Psoas muscle (tissue), 8 donors: ENCODE measurements at regions of chr4 and their contacts with region 1.

Region 1: DNA sequence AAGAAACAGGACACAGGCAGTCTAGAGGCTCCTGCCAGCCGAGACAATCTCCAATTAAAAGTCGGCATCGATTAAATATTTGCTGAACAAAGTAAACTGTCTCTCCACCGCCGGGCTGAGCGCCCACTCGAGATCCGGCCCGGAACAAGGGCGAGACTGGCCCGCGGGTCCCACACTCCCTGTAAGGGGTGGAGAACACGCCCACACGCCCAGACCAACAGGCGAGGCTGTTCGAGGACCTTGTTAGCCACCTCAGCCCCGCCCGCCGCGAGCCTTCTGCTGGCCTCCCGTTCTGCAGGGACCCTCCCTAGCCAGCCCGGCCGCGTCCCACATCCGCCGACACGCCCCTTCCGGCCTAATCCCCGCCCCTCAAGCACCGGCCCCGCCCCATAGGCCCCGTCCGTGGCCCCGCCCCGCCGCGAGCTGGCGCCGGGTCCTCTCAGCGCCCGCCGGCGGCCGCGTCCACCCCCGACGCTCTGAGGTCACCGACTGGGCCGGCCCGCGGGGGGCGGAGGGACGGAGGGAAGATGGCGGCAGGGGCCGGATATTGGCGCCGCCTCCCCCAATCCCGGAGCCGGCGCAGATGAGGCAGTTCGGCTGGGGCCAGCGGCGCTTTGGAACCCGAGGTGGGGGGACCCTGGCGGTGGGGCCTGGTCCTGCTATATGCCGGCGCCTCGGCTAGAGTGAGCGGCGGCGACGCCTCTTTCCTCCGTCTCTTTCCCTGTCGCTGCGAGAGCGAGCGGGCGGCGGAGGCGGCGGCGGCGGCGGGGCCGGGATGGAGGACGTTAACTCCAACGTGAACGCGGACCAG is at the start of gene SLAIN2:
- DNase-seq: peak; percentile 99 to 100
- ATAC-seq: peak; percentile 92 to 96 (median 94)
- H3K4me3 ChIP-seq: peak within 1 kb of the TSS; percentile 95
- H3K27ac ChIP-seq: peak within 1 kb of the TSS; percentile 98
- H3K4me1 ChIP-seq: peaks cover 59% of the 10 kb centered on the region
- H3K27me3 ChIP-seq: no peaks in the 10 kb centered on the region
- CTCF ChIP-seq: peak; percentile 35
- total RNA-seq, gene SLAIN2: 157 to 204 (median 191) TPM

Region 2: DNA sequence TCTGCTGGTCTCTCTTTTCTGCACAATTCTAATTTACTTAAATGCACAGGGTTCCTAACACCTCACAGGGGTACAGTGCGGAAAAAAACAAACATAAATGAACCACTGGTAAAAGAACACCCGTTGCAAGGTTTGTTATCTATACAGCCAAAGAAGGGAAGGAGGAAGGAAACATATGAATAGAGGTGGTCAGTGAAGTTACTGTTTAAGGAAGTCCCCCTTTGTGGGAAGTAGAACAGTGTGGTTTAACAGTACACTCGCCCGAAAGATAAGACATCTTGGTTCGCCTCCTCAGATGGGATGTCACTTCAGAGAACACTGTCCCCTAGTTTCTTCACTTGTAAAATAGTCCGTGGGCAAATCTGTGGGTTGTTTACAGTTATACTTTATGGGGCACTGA is 129.0 kb before region 1 on chr4:
- intact Hi-C with region 1: no loop called
- DNase-seq: no peak
- ATAC-seq: no peak
- H3K4me3 ChIP-seq: no peak overlapping the region
- H3K27ac ChIP-seq: no peak overlapping the region
- H3K4me1 ChIP-seq: no peaks in the 10 kb centered on the region
- H3K27me3 ChIP-seq: no peaks in the 10 kb centered on the region
- CTCF ChIP-seq: no peak

Region 3: DNA sequence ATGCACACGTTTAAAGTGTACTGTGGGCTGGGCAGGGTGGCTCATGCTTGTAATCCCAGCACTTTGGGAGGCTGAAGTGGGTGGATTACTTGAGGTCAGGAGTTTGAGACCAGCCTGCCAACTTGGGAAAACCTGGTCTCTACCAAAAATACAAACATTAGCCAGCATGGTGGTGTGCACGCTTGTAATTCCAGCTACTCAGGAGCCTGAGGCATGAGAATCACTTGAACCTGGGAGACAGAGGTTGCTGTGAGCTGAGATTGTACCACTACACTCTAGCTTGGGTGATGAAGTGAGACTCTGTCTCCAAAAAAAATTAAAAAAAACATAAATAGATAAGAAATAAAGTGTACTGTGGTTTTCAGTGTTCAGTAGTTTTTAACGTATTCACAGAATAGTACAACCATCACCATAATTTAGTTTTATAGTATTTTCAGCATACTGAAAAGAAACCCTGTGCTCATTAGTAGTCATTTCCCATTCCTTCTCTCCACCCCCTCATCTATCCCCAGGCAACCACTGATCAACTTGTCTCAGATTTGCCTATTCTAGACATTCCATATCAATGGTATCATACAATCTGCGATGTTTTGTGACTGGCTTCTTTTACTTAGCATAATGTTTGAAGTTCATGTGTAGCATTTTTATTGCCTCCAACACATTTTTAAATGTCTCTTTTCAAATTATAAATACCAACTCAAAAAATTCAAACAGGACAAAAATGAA is 19.3 kb after region 1 on chr4:
- intact Hi-C with region 1: no loop called
- DNase-seq: no peak
- ATAC-seq: peak in 1 of 4 donors; percentile 22
- H3K4me3 ChIP-seq: no peak overlapping the region
- H3K27ac ChIP-seq: no peak overlapping the region
- H3K4me1 ChIP-seq: peaks cover 24% of the 10 kb centered on the region
- H3K27me3 ChIP-seq: no peaks in the 10 kb centered on the region
- CTCF ChIP-seq: no peak

Region 4: GRCh38 chr4:48375651-48376293 is 34.6 kb after region 1 on chr4:
- intact Hi-C with region 1: loop called in 1 of 2 experiments (anchors 5 kb)
- DNase-seq: no peak
- ATAC-seq: peak; percentile 43 to 80 (median 62)
- H3K4me3 ChIP-seq: no peak overlapping the region
- H3K27ac ChIP-seq: peak overlapping the region; percentile 56
- H3K4me1 ChIP-seq: peaks cover 27% of the 10 kb centered on the region
- H3K27me3 ChIP-seq: no peaks in the 10 kb centered on the region
- CTCF ChIP-seq: no peak

Region 5: DNA sequence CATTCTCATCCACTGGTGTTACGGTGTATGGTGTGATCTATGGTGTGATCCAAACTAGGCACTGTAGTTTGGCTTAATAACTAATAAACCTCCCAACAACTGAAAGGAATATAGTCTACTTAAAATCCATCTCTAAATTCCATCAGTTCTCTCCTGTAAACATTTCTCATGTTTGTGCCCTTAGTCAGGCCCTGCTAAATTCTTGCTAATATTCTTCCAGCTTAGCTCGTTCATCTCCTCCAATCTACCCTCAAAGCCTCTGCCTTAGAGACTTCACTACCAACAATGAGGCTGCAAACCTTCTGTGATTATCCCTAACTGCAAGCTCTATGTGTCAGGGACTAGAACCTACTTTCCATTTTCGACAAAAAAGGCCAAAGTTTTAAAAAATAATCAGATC is 177.0 kb after region 1 on chr4:
- intact Hi-C with region 1: no loop called
- DNase-seq: no peak
- ATAC-seq: no peak
- H3K4me3 ChIP-seq: no peak overlapping the region
- H3K27ac ChIP-seq: no peak overlapping the region
- H3K4me1 ChIP-seq: no peaks in the 10 kb centered on the region
- H3K27me3 ChIP-seq: no peaks in the 10 kb centered on the region
- CTCF ChIP-seq: no peak